ENCODE measurements at regions of chrX and their contacts with region 1.

Region 1: GRCh38 chrX:135086197-135086854 is 34.0 kb downstream of the ETDB start:
- DNase-seq: peak; percentile 72
- H3K4me3 Mint-ChIP-seq: no peak overlapping the region
- H3K27ac Mint-ChIP-seq: no peak overlapping the region
- H3K4me1 Mint-ChIP-seq: no peaks in the 10 kb centered on the region
- H3K27me3 Mint-ChIP-seq: peaks cover 34% of the 10 kb centered on the region
- CTCF ChIP-seq: peak; percentile 54

Region 2: DNA sequence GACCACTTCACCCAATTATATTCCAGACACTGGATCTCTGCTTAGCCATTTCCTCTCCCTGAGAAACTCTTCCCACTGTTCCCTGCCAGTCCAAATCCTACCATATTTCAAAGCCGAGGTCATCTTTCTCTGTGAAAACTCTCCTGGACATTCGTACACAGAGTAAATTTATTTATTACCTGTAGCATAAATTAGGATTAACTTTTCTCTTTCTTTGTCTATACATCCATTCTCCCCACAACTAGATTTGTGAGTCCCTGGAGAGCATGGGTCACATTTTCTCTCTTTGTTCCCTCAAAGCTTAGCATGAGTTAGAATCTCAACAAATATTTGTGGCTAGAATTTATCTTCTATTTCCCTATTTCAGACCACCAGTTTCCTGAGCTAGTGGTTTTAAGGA is 123.3 kb before region 1 on chrX:
- CTCF ChIA-PET with region 1: interaction called, 10 read pairs
- POLR2A ChIA-PET with region 1: no interaction called
- intact Hi-C with region 1: loop called (anchors 1 kb)
- DNase-seq: no peak
- H3K4me3 Mint-ChIP-seq: no peak overlapping the region
- H3K27ac Mint-ChIP-seq: no peak overlapping the region
- H3K4me1 Mint-ChIP-seq: no peaks in the 10 kb centered on the region
- H3K27me3 Mint-ChIP-seq: peaks cover 58% of the 10 kb centered on the region
- CTCF ChIP-seq: no peak

Region 3: GRCh38 chrX:134999469-134999868 is 86.9 kb before region 1 on chrX:
- CTCF ChIA-PET with region 1: no interaction called
- POLR2A ChIA-PET with region 1: no interaction called
- intact Hi-C with region 1: no loop called
- DNase-seq: peak; percentile 52
- H3K4me3 Mint-ChIP-seq: no peak overlapping the region
- H3K27ac Mint-ChIP-seq: no peak overlapping the region
- H3K4me1 Mint-ChIP-seq: peaks cover 5% of the 10 kb centered on the region
- H3K27me3 Mint-ChIP-seq: peaks cover 35% of the 10 kb centered on the region
- CTCF ChIP-seq: peak; percentile 47